ENCODE measurements at regions of chr1 and their contacts with region 1.

Region 1: GRCh38 chr1:66242646-66243547 is 291.1 kb upstream of the SGIP1 start:
- DNase-seq: peak; percentile 94
- H3K4me3 ChIP-seq: no peak overlapping the region
- H3K27ac ChIP-seq: peak overlapping the region; percentile 6
- H3K4me1 ChIP-seq: peaks cover 54% of the 10 kb centered on the region
- H3K27me3 ChIP-seq: no peaks in the 10 kb centered on the region
- CTCF ChIP-seq: peak; percentile 100

Region 2: DNA sequence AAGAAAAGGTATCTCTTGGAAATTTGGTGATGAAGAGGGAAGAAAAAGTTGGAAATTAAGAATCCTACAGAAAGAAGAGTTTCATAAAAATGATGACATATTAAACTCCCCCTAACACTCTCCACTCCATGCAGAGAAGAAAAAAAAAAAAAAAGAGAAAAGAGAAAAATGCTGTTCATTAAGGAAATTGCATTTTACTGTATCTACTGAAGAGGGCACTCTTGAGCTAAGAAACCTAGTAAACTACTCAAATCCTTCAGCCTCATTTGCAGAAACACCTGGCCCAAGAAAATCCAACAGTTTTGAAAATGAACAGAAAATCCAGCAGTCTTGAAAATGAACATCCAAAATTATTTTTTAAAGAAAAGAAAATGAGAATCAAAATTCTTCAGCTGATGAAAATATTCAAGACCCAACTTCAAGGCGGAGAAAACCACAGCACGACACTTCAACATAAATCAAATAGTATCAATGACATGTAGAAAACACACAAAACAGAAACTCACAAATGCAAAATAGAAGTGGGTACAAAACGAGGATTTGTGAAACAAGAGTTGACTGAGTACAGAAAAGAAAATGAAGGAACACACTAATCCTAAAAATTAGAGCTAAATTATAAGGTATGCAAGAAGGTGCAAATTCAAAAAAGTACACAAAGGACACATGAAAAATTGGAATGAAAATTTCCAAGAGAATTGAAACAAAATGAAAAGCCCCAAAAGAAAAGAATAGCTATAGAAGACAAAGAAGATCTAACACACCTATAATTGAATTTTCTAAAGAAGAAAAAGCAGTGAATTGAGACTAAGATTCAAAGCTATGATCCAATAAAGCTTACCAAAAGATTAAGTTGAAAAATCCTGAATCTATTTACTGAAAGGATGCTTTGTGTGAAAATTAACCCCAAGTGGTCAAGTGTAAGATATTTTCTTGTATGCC is 1006.8 kb before region 1 on chr1:
- CTCF ChIA-PET with region 1: no interaction called
- POLR2A ChIA-PET with region 1: no interaction called
- intact Hi-C with region 1: loop called (anchors 10 kb)
- DNase-seq: peak; percentile 61
- H3K4me3 ChIP-seq: no peak overlapping the region
- H3K27ac ChIP-seq: no peak overlapping the region
- H3K4me1 ChIP-seq: no peaks in the 10 kb centered on the region
- H3K27me3 ChIP-seq: no peaks in the 10 kb centered on the region
- CTCF ChIP-seq: peak; percentile 73

Region 3: GRCh38 chr1:65717815-65718454 is 525.0 kb before region 1 on chr1:
- CTCF ChIA-PET with region 1: no interaction called
- POLR2A ChIA-PET with region 1: no interaction called
- intact Hi-C with region 1: loop called (anchors 5 kb)
- DNase-seq: peak; percentile 9
- H3K4me3 ChIP-seq: no peak overlapping the region
- H3K27ac ChIP-seq: no peak overlapping the region
- H3K4me1 ChIP-seq: no peaks in the 10 kb centered on the region
- H3K27me3 ChIP-seq: no peaks in the 10 kb centered on the region
- CTCF ChIP-seq: peak; percentile 20; the same call in 1 of the 2 replicates

Region 4: GRCh38 chr1:65958561-65959350 is 284.1 kb before region 1 on chr1:
- CTCF ChIA-PET with region 1: interaction called, 12 read pairs
- POLR2A ChIA-PET with region 1: no interaction called
- intact Hi-C with region 1: loop called (anchors 1 kb)
- DNase-seq: peak; percentile 75
- H3K4me3 ChIP-seq: no peak overlapping the region
- H3K27ac ChIP-seq: no peak overlapping the region
- H3K4me1 ChIP-seq: no peaks in the 10 kb centered on the region
- H3K27me3 ChIP-seq: no peaks in the 10 kb centered on the region
- CTCF ChIP-seq: peak; percentile 75

Region 5: GRCh38 chr1:65992165-65992840 is 250.6 kb before region 1 on chr1:
- CTCF ChIA-PET with region 1: interaction called, 18 read pairs
- POLR2A ChIA-PET with region 1: no interaction called
- intact Hi-C with region 1: no loop called
- DNase-seq: peak; percentile 77
- H3K4me3 ChIP-seq: peak overlapping the region; percentile 47
- H3K27ac ChIP-seq: peak overlapping the region; percentile 57
- H3K4me1 ChIP-seq: peaks cover 9% of the 10 kb centered on the region
- H3K27me3 ChIP-seq: no peaks in the 10 kb centered on the region
- CTCF ChIP-seq: peak; percentile 35; the same call in 1 of the 2 replicates

Region 6: DNA sequence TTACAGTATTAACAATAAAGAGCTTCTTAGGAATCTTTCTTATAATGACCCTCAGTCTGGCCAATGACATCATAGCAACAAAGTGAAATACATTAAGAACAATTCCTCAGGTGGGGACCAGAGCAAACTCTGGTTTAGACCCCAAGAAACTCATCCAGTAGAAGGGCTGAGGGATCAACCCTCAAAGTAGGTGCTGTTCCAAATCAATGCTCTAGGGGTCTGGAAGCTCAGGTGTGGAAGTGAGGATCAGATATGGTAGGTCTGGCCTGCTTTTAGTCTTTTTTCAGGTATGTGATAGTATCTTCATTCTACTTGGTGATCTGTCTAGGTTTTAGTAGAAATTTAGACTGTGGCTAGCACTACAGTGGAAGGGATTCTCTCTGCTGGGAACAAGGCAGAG is 158.5 kb before region 1 on chr1:
- CTCF ChIA-PET with region 1: interaction called, 11 read pairs
- POLR2A ChIA-PET with region 1: no interaction called
- intact Hi-C with region 1: no loop called
- DNase-seq: no peak
- H3K4me3 ChIP-seq: no peak overlapping the region
- H3K27ac ChIP-seq: no peak overlapping the region
- H3K4me1 ChIP-seq: no peaks in the 10 kb centered on the region
- H3K27me3 ChIP-seq: no peaks in the 10 kb centered on the region
- CTCF ChIP-seq: 0 out of 2 replicates have a peak, but pooled peaks have one; percentile 9

Region 7: GRCh38 chr1:66490816-66491215 is 247.9 kb after region 1 on chr1:
- CTCF ChIA-PET with region 1: no interaction called
- POLR2A ChIA-PET with region 1: no interaction called
- intact Hi-C with region 1: no loop called
- DNase-seq: no peak
- H3K4me3 ChIP-seq: no peak overlapping the region
- H3K27ac ChIP-seq: no peak overlapping the region
- H3K4me1 ChIP-seq: no peaks in the 10 kb centered on the region
- H3K27me3 ChIP-seq: no peaks in the 10 kb centered on the region
- CTCF ChIP-seq: no peak

Measured in A673 (cell line).